ENCODE measurements at regions of chr7 and their contacts with region 1.

Region 1: GRCh38 chr7:118057404-118057803 is 126.6 kb upstream of the LSM8 start:
- DNase-seq: no peak
- H3K4me3 Mint-ChIP-seq: no peak overlapping the region
- H3K27ac Mint-ChIP-seq: no peak overlapping the region
- H3K4me1 Mint-ChIP-seq: peaks cover 7% of the 10 kb centered on the region
- H3K27me3 Mint-ChIP-seq: no peaks in the 10 kb centered on the region

Region 2: GRCh38 chr7:118072893-118073674 is 15.7 kb after region 1 on chr7:
- intact Hi-C with region 1: loop called (anchors 2 kb)
- DNase-seq: no peak
- H3K4me3 Mint-ChIP-seq: no peak overlapping the region
- H3K27ac Mint-ChIP-seq: no peak overlapping the region
- H3K4me1 Mint-ChIP-seq: no peaks in the 10 kb centered on the region
- H3K27me3 Mint-ChIP-seq: no peaks in the 10 kb centered on the region

Region 3: GRCh38 chr7:118080947-118081346 is 23.5 kb after region 1 on chr7:
- intact Hi-C with region 1: loop called (anchors 2 kb)
- DNase-seq: peak; percentile 80
- H3K4me3 Mint-ChIP-seq: peak overlapping the region; percentile 35
- H3K27ac Mint-ChIP-seq: peak overlapping the region; percentile 57
- H3K4me1 Mint-ChIP-seq: peaks cover 19% of the 10 kb centered on the region
- H3K27me3 Mint-ChIP-seq: no peaks in the 10 kb centered on the region

Measured in activated CD4-positive, alpha-beta T cell treated with anti-CD3 and anti-CD28 coated beads, Interleukin-2, amount 10 ng/mL, durations not matched to agents 24 days and 14 days (primary cell).